B cell (primary cell): ENCODE measurements at regions of chr3 and their contacts with region 1.

Region 1: GRCh38 chr3:188712248-188712924 is 459.4 kb upstream of the TPRG1 start:
- DNase-seq: peak; percentile 36
- ATAC-seq: peak; percentile 43
- H3K4me3 ChIP-seq: no peak overlapping the region
- H3K4me3 Mint-ChIP-seq: peak overlapping the region; percentile 20
- H3K27ac ChIP-seq: peak overlapping the region in 1 of 2 donors; percentile 28
- H3K27ac Mint-ChIP-seq: peak overlapping the region; percentile 27
- H3K4me1 ChIP-seq: peaks cover 9 to 11% of the 10 kb centered on the region in 2 donors
- H3K4me1 Mint-ChIP-seq: peaks cover 17% of the 10 kb centered on the region
- H3K27me3 ChIP-seq: no peaks in the 10 kb centered on the region
- H3K27me3 Mint-ChIP-seq: no peaks in the 10 kb centered on the region
- CTCF ChIP-seq: no peak

Region 2: DNA sequence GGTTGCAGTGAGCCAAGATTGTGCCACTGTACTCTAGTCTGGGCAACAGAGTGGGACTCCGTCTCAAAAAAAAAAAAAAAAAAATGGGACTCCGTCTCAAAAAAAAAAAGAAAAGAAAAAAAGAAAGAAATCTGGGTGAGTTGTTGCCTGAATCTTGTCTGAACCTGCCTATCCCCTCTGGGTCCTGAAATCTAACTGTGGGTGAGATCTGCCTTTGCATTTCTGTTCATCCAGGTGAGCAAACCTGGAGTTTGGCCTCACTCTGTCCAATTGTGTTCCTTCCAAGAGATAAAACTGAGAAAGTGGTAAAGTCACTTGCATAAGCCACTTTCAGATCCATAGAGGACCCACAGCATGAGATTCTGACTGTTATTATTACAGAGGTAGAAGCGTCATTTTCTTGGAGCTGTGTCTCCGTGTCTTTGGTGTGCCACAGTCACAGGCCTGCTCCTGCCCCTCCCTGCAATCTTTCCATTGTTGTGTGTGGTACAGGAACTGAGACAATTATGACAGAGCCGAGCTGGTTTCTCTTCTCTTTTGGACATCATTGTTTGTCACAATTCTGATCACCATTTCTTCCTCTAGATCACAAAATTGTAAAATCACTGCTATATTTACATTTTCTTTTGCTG is 322.6 kb before region 1 on chr3:
- CTCF ChIA-PET with region 1: no interaction called
- POLR2A ChIA-PET with region 1: no interaction called
- intact Hi-C with region 1: no loop called
- DNase-seq: peak; percentile 86
- ATAC-seq: peak; percentile 88
- H3K4me3 ChIP-seq: peak overlapping the region in 1 of 5 experiments; percentile 42
- H3K4me3 Mint-ChIP-seq: peak overlapping the region; percentile 82
- H3K27ac ChIP-seq: peak overlapping the region; percentile 94 to 96
- H3K27ac Mint-ChIP-seq: peak overlapping the region; percentile 99
- H3K4me1 ChIP-seq: peaks cover 55 to 75% of the 10 kb centered on the region in 2 donors
- H3K4me1 Mint-ChIP-seq: peaks cover 80% of the 10 kb centered on the region
- H3K27me3 ChIP-seq: no peaks in the 10 kb centered on the region
- H3K27me3 Mint-ChIP-seq: no peaks in the 10 kb centered on the region
- CTCF ChIP-seq: no peak

Region 3: DNA sequence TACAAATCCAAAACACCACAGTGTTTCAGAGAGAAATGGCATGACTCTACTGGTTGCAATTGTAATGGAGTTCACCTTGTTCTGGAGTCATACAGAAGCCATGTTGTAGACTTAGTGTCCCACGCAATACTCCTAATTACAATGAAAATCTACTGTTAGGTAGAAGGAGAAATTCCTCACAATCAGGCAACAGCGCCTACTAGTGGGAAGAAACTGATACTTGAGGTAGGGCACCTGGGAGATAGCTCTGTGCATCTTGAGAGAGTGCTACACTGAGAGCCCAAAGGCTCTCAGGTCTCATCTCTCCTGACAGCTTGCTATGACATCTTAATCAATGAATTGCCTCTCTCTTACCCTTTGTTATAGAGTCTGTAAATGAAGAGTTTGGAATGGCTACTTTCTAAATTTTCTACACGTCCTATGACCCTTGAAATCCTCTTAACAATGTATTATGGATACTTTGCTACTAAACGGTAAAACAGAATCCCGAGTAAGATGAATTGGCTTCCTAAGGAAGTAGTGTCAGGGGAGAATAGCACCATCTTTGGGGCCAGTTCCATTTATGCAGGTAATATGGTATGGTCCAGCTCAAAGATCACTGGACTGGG is 36.7 kb after region 1 on chr3:
- CTCF ChIA-PET with region 1: interaction called, 7 read pairs
- POLR2A ChIA-PET with region 1: no interaction called
- intact Hi-C with region 1: loop called (anchors 5 kb)
- DNase-seq: peak; percentile 65
- ATAC-seq: no peak
- H3K4me3 ChIP-seq: no peak overlapping the region
- H3K4me3 Mint-ChIP-seq: no peak overlapping the region
- H3K27ac ChIP-seq: no peak overlapping the region
- H3K27ac Mint-ChIP-seq: no peak overlapping the region
- H3K4me1 ChIP-seq: peaks cover 18 to 20% of the 10 kb centered on the region in 2 donors
- H3K4me1 Mint-ChIP-seq: peaks cover 22% of the 10 kb centered on the region
- H3K27me3 ChIP-seq: no peaks in the 10 kb centered on the region
- H3K27me3 Mint-ChIP-seq: no peaks in the 10 kb centered on the region
- CTCF ChIP-seq: peak; percentile 76

Region 4: DNA sequence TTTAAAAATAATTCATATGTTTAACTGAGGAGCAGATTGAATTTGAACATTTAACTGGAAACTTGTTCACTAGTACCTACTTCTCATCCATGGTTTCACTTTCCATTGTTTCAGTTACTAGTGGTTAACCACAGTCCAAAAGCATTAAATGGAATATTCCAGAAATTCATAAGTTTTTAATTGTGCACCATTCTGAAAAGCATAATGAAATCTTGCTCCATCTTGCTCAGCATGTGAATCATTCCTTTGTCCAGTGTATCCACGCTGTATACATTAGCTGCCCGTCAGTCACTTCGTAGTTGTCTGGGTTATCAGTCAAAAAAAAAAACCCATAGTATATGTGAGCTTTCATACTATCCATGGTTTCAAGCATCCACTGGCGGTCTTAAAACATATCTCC is 677.0 kb after region 1 on chr3:
- CTCF ChIA-PET with region 1: no interaction called
- POLR2A ChIA-PET with region 1: no interaction called
- intact Hi-C with region 1: no loop called
- DNase-seq: no peak
- ATAC-seq: no peak
- H3K4me3 ChIP-seq: no peak overlapping the region
- H3K4me3 Mint-ChIP-seq: no peak overlapping the region
- H3K27ac ChIP-seq: no peak overlapping the region
- H3K27ac Mint-ChIP-seq: no peak overlapping the region
- H3K4me1 ChIP-seq: no peaks in the 10 kb centered on the region
- H3K4me1 Mint-ChIP-seq: peaks cover 2% of the 10 kb centered on the region
- H3K27me3 ChIP-seq: no peaks in the 10 kb centered on the region
- H3K27me3 Mint-ChIP-seq: no peaks in the 10 kb centered on the region
- CTCF ChIP-seq: no peak